ENCODE measurements at regions of chr9 and their contacts with region 1.

Region 1: DNA sequence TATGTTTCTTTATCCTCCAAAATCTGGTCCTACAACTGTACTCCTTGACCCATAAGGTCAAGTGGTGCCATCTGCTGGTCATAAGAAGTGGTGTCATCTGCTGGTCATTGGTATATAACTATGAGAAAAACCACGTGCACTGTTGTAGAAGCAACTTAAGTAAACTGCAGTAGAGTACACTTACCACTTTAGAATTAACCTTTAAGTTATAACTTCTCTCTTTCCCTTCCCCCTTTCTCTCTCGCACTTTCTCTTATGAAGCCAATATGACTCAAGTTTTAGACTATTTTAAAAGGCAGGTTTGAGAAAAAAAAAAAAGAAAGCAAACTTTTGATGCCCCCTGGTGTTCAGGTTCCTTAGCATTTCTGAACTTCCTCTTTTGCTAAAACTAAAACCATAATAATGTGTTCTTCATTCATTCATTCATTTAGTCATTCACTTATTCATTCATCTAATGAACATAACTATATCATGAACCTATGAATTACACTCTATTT is 12.8 kb upstream of the MTAP start:
- DNase-seq: peak; percentile 95
- ATAC-seq: peak; percentile 95
- H3K4me3 ChIP-seq: peak overlapping the region; percentile 4; the same call in 1 of the 2 replicates
- H3K27ac ChIP-seq: no peak overlapping the region
- H3K4me1 ChIP-seq: no peaks in the 10 kb centered on the region
- H3K27me3 ChIP-seq: no peaks in the 10 kb centered on the region
- CTCF ChIP-seq: peak; percentile 70
- POLR2A ChIP-seq: no peak
- RAD21 ChIP-seq: peak; percentile 84

Region 2: GRCh38 chr9:21239911-21240310 is 549.7 kb before region 1 on chr9 and contains the start of gene IFNA14:
- CTCF ChIA-PET with region 1: interaction called, 3 read pairs
- POLR2A ChIA-PET with region 1: no interaction called
- dilution Hi-C with region 1: no loop called
- in situ Hi-C with region 1: no loop called
- intact Hi-C with region 1: loop called (anchors 1 kb)
- DNase-seq: no peak
- ATAC-seq: no peak
- H3K4me3 ChIP-seq: no peak within 1 kb of the TSS
- H3K27ac ChIP-seq: no peak within 1 kb of the TSS
- H3K4me1 ChIP-seq: no peaks in the 10 kb centered on the region
- H3K27me3 ChIP-seq: no peaks in the 10 kb centered on the region; the same call in 1 of the 2 replicates
- CTCF ChIP-seq: no peak
- POLR2A ChIP-seq: no peak
- RAD21 ChIP-seq: no peak
- total RNA-seq, gene IFNA14: not detected in 2 replicates

Region 3: GRCh38 chr9:21326526-21327139 is 463.0 kb before region 1 on chr9:
- CTCF ChIA-PET with region 1: no interaction called
- POLR2A ChIA-PET with region 1: no interaction called
- dilution Hi-C with region 1: no loop called
- in situ Hi-C with region 1: no loop called
- intact Hi-C with region 1: loop called (anchors 2 kb)
- DNase-seq: peak; percentile 44
- ATAC-seq: peak; percentile 78
- H3K4me3 ChIP-seq: no peak overlapping the region
- H3K27ac ChIP-seq: no peak overlapping the region
- H3K4me1 ChIP-seq: 0 out of 2 replicates have a peak, but pooled peaks cover under 1% of the 10 kb centered on the region
- H3K27me3 ChIP-seq: no peaks in the 10 kb centered on the region
- CTCF ChIP-seq: peak; percentile 72
- POLR2A ChIP-seq: no peak
- RAD21 ChIP-seq: peak; percentile 83

Region 4: DNA sequence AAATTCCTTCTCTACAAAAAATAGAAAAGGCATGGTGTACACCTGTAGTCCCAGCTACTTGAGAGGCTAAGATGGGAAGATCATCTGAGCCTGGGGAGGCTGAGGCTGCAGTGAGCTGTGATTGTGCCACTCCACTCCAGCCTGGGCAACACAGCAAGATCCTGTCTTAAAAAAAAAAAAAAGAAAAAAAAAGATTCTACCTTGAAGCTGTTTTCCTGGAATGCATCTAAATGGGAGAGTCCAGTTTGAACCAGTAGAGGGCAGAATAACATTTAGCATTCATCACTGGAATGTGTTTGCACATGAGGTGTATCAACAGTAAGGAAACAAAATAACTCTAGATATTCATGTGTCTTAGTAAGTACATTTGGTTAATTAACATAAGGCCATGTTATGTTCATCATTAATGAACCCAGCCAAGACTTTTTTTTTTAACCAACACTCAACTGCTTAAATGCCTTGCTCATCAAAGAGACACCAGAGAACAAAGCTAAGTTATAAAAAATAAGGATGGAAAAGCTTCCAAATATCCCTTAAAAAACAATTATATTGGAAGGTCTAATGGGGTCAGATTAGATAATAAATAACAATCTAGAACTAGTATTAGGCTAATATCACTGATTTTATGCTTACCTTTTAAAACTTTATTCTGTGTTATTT is 323.6 kb before region 1 on chr9:
- CTCF ChIA-PET with region 1: interaction called, 20 read pairs
- POLR2A ChIA-PET with region 1: no interaction called
- dilution Hi-C with region 1: no loop called
- in situ Hi-C with region 1: no loop called
- intact Hi-C with region 1: loop called (anchors 1 kb)
- DNase-seq: peak; percentile 68
- ATAC-seq: peak; percentile 75
- H3K4me3 ChIP-seq: no peak overlapping the region
- H3K27ac ChIP-seq: no peak overlapping the region
- H3K4me1 ChIP-seq: no peaks in the 10 kb centered on the region
- H3K27me3 ChIP-seq: no peaks in the 10 kb centered on the region
- CTCF ChIP-seq: peak; percentile 83
- POLR2A ChIP-seq: no peak
- RAD21 ChIP-seq: peak; percentile 89

Region 5: GRCh38 chr9:21549251-21549765 is 240.3 kb before region 1 on chr9:
- CTCF ChIA-PET with region 1: no interaction called
- POLR2A ChIA-PET with region 1: no interaction called
- dilution Hi-C with region 1: loop called (anchors 25 kb)
- in situ Hi-C with region 1: no loop called
- intact Hi-C with region 1: loop called (anchors 1 kb)
- DNase-seq: peak; percentile 97
- ATAC-seq: peak; percentile 80
- H3K4me3 ChIP-seq: peak overlapping the region; percentile 39; the same call in 1 of the 2 replicates
- H3K27ac ChIP-seq: peak overlapping the region; percentile 67
- H3K4me1 ChIP-seq: peaks cover 22% of the 10 kb centered on the region
- H3K27me3 ChIP-seq: no peaks in the 10 kb centered on the region
- CTCF ChIP-seq: no peak
- POLR2A ChIP-seq: no peak
- RAD21 ChIP-seq: no peak

Region 6: DNA sequence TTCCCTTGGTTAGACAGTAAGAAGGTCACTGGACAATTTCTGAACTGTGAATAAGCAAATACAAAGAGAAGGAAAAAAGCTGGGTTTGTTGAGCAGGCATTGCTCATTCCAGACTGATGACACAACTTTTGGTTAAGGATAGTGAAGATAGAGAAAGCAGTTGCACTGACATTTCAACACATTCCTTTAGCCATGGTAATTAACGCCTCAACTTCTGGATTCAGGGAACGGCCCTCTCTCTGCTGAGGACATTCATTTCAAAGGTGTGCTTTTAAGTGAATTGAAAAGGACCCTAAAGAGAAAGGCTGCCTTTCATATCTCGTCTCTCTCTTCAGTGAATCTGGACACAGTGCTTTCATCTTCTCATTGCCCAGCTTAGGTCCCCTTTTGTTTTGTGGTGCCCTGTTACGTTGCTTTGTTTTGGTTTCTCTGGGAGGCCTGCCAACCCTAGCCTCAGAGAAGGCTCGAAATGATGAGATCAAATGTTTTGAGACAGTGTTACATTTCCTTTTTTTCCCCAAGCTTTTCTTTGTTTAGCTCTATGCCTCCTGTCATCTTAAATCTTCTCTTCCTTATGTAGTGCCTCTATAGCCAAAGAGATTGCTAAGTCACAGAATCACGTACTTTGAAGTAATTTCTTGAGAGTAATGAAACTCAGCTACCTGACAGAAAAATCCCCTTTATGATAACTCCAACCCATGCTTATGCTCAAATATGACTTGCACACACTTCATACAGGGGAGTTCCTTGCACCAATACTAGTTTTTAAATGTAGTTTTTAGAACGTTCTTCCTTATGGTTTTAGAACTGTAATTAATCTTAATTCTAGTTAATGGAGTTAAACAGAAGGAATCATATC is 213.0 kb before region 1 on chr9:
- CTCF ChIA-PET with region 1: no interaction called
- POLR2A ChIA-PET with region 1: no interaction called
- dilution Hi-C with region 1: loop called (anchors 25 kb)
- in situ Hi-C with region 1: no loop called
- intact Hi-C with region 1: loop called (anchors 5 kb)
- DNase-seq: peak; percentile 87
- ATAC-seq: peak; percentile 83
- H3K4me3 ChIP-seq: peak overlapping the region; percentile 36; the same call in 1 of the 2 replicates
- H3K27ac ChIP-seq: peak overlapping the region; percentile 94
- H3K4me1 ChIP-seq: peaks cover 7% of the 10 kb centered on the region
- H3K27me3 ChIP-seq: no peaks in the 10 kb centered on the region
- CTCF ChIP-seq: no peak
- POLR2A ChIP-seq: no peak
- RAD21 ChIP-seq: no peak

Region 7: DNA sequence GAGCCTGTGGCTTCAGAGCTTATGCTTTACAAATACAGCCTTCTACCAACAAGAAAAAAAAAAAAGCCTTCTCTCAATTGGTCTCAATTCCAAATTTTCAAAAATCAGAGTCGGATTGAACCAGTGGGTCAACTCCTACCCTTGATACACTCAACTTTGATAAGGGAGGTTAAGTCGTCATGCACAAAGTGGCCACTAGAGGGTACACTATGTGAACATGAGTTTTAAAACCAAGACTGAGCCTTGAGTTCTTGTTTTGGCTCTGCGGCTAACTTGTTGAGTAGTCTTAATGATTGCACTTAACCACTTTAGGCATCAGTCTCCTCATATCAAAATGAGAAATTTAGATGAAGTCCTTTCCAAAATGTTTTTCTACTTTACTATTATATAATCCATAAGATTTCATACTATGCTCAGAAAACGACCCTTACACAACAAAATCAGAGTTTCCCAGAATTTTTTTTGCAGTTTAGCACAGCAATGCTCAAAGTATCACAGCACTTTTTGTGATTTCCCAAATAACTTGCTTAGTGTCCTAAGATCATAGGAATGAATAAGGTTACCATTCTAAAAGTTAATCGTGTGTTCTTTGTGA is 80.0 kb before region 1 on chr9:
- CTCF ChIA-PET with region 1: interaction called, 4 read pairs
- POLR2A ChIA-PET with region 1: no interaction called
- dilution Hi-C with region 1: no loop called
- in situ Hi-C with region 1: no loop called
- intact Hi-C with region 1: loop called (anchors 1 kb)
- DNase-seq: peak; percentile 53
- ATAC-seq: peak; percentile 69
- H3K4me3 ChIP-seq: no peak overlapping the region
- H3K27ac ChIP-seq: no peak overlapping the region
- H3K4me1 ChIP-seq: peaks cover 6% of the 10 kb centered on the region; the same call in 1 of the 2 replicates
- H3K27me3 ChIP-seq: no peaks in the 10 kb centered on the region
- CTCF ChIP-seq: peak; percentile 67
- POLR2A ChIP-seq: no peak
- RAD21 ChIP-seq: peak; percentile 56

Measured in IMR-90 (cell line).